Posterior vena cava (tissue), 2 donors: ENCODE measurements at regions of chr5 and their contacts with region 1.

Region 1: DNA sequence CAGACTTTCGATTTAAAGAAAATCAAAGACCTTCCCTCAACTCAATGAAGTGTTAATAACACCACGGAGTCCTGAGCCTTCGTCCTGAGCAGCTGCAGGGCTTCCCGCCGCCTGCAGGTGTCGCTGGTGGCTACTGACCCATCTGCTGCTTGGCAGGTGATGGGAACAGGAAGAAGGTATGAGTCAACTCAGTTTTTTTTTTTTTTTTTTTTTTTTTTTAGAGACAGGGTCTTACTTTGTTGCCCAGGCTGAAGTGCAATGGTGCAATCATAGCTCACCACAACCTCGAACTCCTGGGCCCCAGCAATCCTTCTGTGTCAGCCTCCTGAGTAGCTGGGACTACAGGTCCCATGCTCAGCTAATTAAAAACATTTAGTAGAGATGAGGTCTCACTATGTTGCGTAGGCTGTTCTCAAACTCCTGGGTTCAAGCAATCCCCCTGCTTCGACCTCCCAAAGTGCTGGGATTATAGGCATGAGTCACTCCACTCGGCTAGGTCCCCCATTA is 185.7 kb upstream of the IL12B start:
- DNase-seq: peak; percentile 86

Region 2: DNA sequence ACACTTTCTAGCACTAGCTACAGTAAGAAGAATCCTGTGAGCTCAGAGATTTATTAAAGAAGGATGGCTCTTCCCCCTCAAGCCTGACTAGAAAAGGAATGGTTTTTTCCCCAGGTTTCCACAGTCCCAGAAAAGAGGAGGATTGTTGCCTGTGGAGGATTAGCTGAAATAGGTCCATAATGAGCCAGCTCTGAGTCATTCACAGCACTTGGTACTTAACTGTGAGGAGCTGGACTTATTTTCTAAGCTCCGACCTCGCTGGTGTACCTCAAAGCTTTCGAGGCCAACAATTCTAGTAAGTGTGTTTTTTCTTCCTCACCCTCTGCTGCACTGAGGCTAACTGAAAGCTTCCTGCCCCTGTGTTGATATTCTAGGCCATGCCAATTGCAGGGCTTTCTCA is 36.8 kb after region 1 on chr5:
- intact Hi-C with region 1: no loop called
- DNase-seq: no peak

Region 3: DNA sequence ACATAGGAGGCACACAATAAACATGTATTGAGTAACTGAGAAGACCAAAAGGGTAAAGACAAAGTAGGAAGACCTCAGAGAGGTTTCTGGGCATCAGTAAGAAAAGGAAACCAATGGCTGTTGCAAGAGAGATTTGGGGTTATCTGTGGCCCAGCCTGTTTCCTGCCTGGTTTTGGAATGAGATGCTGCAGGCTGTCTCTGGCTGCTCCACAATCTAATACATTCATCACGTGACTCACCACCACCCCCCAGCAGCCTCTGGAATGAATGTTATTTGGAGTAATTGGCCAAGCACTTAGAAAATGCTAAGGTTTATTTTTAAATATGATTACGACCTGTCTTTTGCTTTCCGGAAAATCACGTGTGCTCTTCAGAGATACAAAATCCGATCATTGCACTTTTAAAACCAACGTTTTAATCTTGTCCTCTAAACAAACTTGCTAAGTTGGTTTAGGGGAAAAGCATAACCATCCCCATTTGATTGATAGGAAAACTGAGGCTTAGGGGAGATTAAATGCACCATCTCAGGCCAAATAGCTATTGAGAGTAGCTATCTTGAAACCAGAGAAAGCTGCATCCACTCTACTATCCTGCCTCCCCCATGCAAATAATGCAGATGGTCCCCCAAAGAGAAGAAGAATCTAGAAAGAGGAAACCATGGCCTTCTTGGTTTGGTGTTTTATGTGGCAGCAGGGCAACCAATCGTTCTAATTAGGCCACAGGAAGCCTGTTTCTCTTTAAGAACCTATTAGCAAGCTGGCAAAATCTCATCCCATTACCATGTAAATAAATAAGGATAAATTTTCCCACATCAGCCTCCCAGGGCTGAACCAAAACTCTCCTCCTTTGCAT is 248.5 kb after region 1 on chr5:
- intact Hi-C with region 1: loop called in 1 of 2 experiments (anchors 10 kb)
- DNase-seq: no peak

Region 4: GRCh38 chr5:159915904-159916840 is 400.2 kb after region 1 on chr5 and contains the start of gene ADRA1B:
- intact Hi-C with region 1: loop called (anchors 5 to 10 kb)
- DNase-seq: peak; percentile 91
- total RNA-seq, gene ADRA1B: 4.2 to 8.0 TPM

Region 5: GRCh38 chr5:159975462-159976019 is 459.6 kb after region 1 on chr5:
- intact Hi-C with region 1: loop called in 1 of 2 experiments (anchors 10 kb)
- DNase-seq: no peak